Left cardiac atrium (tissue), 4 donors: ENCODE measurements at regions of chr6 and their contacts with region 1.

Region 1: GRCh38 chr6:118551063-118552053 is 3.3 kb downstream of the PLN start:
- DNase-seq: no peak
- ATAC-seq: peak; percentile 65 to 78

Region 2: DNA sequence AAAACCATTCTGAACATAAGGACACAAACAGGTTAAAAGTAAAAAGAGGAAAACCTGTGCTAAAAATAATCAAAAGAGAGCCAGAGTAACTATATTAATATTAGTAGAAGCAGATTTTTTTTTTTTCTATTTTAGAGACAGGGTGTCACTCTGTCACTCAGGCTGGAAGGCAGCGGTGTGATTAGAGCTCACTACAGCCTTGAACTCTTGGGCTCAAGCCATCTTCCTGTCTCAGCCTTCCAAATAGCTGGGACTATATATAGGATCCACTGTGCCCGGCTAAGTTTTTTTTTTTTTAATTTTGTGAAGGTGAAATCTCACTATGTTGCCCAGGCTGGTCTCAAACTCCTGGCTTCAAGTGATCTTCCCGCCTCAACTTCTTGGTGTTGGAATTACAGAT is 36.7 kb before region 1 on chr6:
- intact Hi-C with region 1: loop called (anchors 5 kb)
- DNase-seq: peak; percentile 47
- ATAC-seq: peak; percentile 98 to 99